ENCODE measurements at regions of chr17 and their contacts with region 1.

Region 1: GRCh38 chr17:21043286-21044232 is 748 bp upstream of the USP22 start:
- DNase-seq: peak; percentile 98
- H3K4me3 ChIP-seq: peak overlapping the region; percentile 47 to 60 (median 57)
- H3K27ac ChIP-seq: peak overlapping the region; percentile 91
- H3K4me1 ChIP-seq: peaks cover 22% of the 10 kb centered on the region
- H3K27me3 ChIP-seq: peaks cover 0 to 3% of the 10 kb centered on the region in 2 experiments
- CTCF ChIP-seq: peak; percentile 89 to 90
- POLR2A ChIP-seq: peak; percentile 55

Region 2: DNA sequence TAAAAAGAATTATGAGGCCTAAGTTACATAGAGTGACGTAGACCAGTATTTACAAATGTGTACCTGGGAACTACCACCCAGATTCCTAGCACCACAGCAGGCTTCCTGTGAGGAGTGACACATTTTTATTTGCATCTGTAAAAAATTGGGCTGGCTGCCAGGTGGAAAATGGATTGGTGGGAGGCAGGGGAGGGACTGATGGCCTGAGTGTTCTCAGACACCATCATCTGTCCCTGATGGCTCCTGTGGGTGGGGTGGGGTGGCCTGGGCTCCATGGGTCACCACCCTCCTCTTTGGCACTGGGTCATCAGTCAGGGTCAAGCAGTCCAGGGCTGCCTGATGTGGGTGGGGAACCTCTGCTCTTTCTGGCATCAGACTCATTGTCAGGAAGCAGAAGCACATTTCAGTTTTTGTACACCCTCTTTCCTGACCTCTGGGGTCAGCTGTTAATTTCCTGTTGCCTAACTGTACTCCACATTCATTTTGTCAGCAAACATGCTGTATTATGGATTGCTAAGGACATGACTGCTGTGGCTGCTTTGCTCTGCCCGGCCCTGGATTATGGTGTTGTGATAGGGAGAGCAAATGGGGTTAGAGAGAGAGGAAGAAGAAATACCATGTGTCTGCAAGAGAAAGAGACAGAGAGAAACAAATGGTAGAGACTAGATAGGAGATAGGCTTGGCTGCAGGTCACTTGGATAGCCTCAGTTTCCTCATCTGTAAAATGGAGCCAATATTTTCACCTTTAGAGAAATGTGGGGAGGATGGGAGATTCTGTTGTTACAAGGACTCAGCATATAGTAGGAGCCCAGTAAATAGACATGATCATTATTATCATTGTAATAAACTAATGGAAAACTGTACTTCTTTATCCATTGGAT is 1645.0 kb before region 1 on chr17:
- CTCF ChIA-PET with region 1: no interaction called
- POLR2A ChIA-PET with region 1: no interaction called
- dilution Hi-C with region 1: no loop called
- intact Hi-C with region 1: no loop called
- DNase-seq: peak; percentile 68
- H3K4me3 ChIP-seq: no peak overlapping the region
- H3K27ac ChIP-seq: no peak overlapping the region
- H3K4me1 ChIP-seq: peaks cover 10% of the 10 kb centered on the region
- H3K27me3 ChIP-seq: peaks cover 0 to 2% of the 10 kb centered on the region in 2 experiments
- CTCF ChIP-seq: no peak
- POLR2A ChIP-seq: no peak

Region 3: GRCh38 chr17:20935740-20936139 is 107.8 kb before region 1 on chr17:
- CTCF ChIA-PET with region 1: no interaction called
- POLR2A ChIA-PET with region 1: no interaction called
- dilution Hi-C with region 1: no loop called
- intact Hi-C with region 1: loop called (anchors 1 kb)
- DNase-seq: peak; percentile 91
- H3K4me3 ChIP-seq: peak overlapping the region in 1 of 3 experiments; percentile 52
- H3K27ac ChIP-seq: peak overlapping the region; percentile 93
- H3K4me1 ChIP-seq: peaks cover 33% of the 10 kb centered on the region
- H3K27me3 ChIP-seq: no peaks in the 10 kb centered on the region
- CTCF ChIP-seq: no peak
- POLR2A ChIP-seq: no peak

Region 4: GRCh38 chr17:20955427-20956323 is 87.9 kb before region 1 on chr17:
- CTCF ChIA-PET with region 1: no interaction called
- POLR2A ChIA-PET with region 1: no interaction called
- dilution Hi-C with region 1: no loop called
- intact Hi-C with region 1: no loop called
- DNase-seq: peak; percentile 21
- H3K4me3 ChIP-seq: no peak overlapping the region
- H3K27ac ChIP-seq: no peak overlapping the region
- H3K4me1 ChIP-seq: no peaks in the 10 kb centered on the region
- H3K27me3 ChIP-seq: peaks cover 3 to 4% of the 10 kb centered on the region in 2 experiments
- CTCF ChIP-seq: no peak
- POLR2A ChIP-seq: no peak

Region 5: GRCh38 chr17:20967771-20968170 is 75.8 kb before region 1 on chr17:
- CTCF ChIA-PET with region 1: no interaction called
- POLR2A ChIA-PET with region 1: no interaction called
- dilution Hi-C with region 1: no loop called
- intact Hi-C with region 1: no loop called
- DNase-seq: no peak
- H3K4me3 ChIP-seq: no peak overlapping the region
- H3K27ac ChIP-seq: no peak overlapping the region
- H3K4me1 ChIP-seq: no peaks in the 10 kb centered on the region
- H3K27me3 ChIP-seq: no peaks in the 10 kb centered on the region
- CTCF ChIP-seq: no peak
- POLR2A ChIP-seq: no peak

Region 6: DNA sequence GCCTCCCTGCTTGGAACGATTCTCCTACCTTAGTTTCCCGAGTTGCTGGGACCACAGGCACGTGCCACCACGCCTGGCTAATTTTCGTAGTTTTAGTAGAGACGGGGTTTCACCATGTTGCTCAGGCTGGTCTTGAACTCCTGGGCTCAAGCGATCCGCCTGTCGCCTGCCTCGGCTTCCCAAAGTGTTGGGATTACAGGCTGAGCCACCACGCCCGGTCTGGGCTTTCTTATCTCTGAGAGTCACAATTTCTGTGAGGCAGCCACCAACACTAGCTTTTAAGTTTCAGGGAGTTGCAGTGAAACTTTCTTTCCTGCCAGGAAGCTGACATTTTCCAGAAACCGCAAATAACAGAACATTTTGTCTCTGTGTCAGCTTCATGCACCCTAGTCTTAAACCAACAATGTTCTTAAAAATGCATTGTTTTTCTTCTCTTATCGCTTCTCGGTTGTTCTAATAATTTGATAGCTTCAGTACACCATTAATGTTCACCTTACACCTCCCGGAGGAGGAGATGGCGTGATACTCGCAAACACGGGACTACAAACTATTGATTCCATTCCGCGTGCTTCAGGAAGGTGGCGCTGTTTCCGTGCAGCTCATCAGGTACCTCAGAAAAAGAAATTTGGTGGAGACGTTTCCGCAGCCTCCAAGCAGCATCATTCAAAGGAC is 75.8 kb after region 1 on chr17:
- CTCF ChIA-PET with region 1: interaction called, 19 read pairs
- POLR2A ChIA-PET with region 1: no interaction called
- dilution Hi-C with region 1: no loop called
- intact Hi-C with region 1: no loop called
- DNase-seq: peak; percentile 61
- H3K4me3 ChIP-seq: peak overlapping the region in 1 of 3 experiments; percentile 9
- H3K27ac ChIP-seq: no peak overlapping the region
- H3K4me1 ChIP-seq: peaks cover 4% of the 10 kb centered on the region
- H3K27me3 ChIP-seq: peaks cover 0 to 2% of the 10 kb centered on the region in 2 experiments
- CTCF ChIP-seq: peak; percentile 81 to 86
- POLR2A ChIP-seq: no peak

Region 7: DNA sequence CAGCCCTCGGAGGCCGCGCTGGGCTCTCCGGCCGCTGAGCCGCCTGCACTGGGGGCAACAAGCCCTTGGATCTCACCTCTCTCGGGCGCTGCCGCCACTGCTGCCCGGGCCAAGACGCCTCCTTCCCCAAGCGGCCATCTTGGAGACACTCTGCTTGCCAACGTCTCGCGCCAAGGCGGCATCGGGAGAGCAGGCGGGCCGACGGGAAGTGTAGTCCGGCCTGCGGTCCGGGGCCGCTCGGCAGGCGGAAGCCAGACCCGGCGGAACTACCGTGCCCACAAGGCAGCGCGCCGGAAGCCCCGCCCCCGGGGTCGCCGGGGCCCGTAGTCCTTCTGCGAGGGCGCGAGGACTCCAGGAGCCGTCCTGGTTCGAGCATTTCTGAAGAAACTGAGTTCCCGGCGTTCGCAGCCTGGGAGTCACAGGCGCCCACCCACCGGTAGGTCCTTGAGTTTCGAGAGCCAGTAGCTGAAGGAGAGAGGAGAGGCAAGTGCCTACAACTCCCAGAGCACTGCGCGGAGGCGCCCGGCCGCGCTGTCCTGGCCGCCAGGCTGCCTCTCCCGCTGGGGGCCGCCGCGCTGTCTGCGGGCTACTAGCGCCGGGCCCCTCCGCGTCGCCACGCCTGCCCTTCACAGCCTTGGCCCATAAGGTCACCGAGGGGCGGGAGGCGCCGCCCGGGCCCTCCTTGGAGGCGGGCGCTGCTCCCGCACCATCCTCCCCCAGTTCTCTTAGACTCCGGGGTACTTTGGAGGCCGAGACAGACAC is 170.6 kb after region 1 on chr17 and contains the start of gene TMEM11:
- CTCF ChIA-PET with region 1: no interaction called
- POLR2A ChIA-PET with region 1: interaction called, 3 read pairs
- dilution Hi-C with region 1: no loop called
- intact Hi-C with region 1: loop called (anchors 2 kb)
- DNase-seq: peak; percentile 97
- H3K4me3 ChIP-seq: peak within 1 kb of the TSS; percentile 73 to 96 (median 96)
- H3K27ac ChIP-seq: peak within 1 kb of the TSS; percentile 77
- H3K4me1 ChIP-seq: peaks cover 20% of the 10 kb centered on the region
- H3K27me3 ChIP-seq: no peaks in the 10 kb centered on the region
- CTCF ChIP-seq: peak in 1 of 2 donors; percentile 5
- POLR2A ChIP-seq: peak; percentile 58
- total RNA-seq, gene TMEM11: 27.4 and 28.8 TPM in 2 replicates

Region 8: GRCh38 chr17:21275579-21276263 is 232.2 kb after region 1 on chr17:
- CTCF ChIA-PET with region 1: interaction called, 10 read pairs
- POLR2A ChIA-PET with region 1: no interaction called
- dilution Hi-C with region 1: no loop called
- intact Hi-C with region 1: no loop called
- DNase-seq: peak; percentile 81
- H3K4me3 ChIP-seq: peak overlapping the region; percentile 5 to 56 (median 39)
- H3K27ac ChIP-seq: no peak overlapping the region
- H3K4me1 ChIP-seq: peaks cover 11% of the 10 kb centered on the region
- H3K27me3 ChIP-seq: no peaks in the 10 kb centered on the region
- CTCF ChIP-seq: no peak
- POLR2A ChIP-seq: peak; percentile 76

Region 9: DNA sequence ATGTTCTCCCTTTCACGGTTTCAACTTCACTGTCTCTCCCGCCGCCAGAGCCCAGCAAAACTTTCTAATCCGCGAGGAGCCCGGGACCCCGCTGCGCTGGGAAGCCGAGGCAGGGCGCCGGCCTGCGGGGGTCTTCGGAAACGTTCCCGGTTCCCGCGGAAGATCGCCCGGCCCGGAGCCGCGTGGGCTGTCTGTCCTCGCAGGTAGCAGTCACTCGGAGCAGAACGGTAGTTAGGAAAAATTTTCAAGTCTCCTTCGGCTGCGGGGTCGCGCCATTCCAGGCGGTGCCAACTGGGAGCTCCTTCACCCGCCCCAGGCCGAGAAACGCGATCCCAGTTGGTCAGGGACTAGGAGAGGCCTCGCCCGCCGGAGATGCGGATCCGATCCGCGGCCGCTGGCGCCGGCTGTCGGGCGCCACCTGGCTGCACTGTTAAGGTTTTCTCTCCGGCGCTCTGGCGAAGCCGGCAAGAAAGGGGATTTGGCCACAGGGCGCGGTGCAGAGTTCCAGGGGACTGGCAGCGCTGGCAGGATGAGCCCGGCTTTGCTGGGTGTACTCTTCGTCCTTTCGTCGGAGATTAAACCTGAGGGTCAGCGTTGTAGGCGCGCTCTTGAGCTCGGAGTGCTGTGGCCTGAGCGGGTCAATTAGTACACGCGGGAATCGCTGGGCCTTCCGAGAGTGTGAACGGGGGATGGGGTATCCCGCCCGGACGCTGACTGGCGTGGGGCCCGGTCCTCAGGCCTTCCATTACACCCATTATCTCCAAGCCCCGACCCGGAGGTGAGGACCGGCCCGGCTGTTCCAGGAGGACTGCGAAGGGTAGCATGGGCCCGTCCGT is 468.0 kb after region 1 on chr17:
- CTCF ChIA-PET with region 1: interaction called, 9 read pairs
- POLR2A ChIA-PET with region 1: no interaction called
- dilution Hi-C with region 1: no loop called
- intact Hi-C with region 1: loop called (anchors 5 kb)
- DNase-seq: peak; percentile 87
- H3K4me3 ChIP-seq: peak overlapping the region; percentile 40 to 78 (median 71)
- H3K27ac ChIP-seq: peak overlapping the region; percentile 7
- H3K4me1 ChIP-seq: peaks cover 9% of the 10 kb centered on the region
- H3K27me3 ChIP-seq: peaks cover 1 to 3% of the 10 kb centered on the region in 2 experiments
- CTCF ChIP-seq: peak; percentile 79 to 85
- POLR2A ChIP-seq: no peak

Measured in endothelial cell of umbilical vein (primary cell).